ENCODE measurements at regions of chr9 and their contacts with region 1.

Region 1: DNA sequence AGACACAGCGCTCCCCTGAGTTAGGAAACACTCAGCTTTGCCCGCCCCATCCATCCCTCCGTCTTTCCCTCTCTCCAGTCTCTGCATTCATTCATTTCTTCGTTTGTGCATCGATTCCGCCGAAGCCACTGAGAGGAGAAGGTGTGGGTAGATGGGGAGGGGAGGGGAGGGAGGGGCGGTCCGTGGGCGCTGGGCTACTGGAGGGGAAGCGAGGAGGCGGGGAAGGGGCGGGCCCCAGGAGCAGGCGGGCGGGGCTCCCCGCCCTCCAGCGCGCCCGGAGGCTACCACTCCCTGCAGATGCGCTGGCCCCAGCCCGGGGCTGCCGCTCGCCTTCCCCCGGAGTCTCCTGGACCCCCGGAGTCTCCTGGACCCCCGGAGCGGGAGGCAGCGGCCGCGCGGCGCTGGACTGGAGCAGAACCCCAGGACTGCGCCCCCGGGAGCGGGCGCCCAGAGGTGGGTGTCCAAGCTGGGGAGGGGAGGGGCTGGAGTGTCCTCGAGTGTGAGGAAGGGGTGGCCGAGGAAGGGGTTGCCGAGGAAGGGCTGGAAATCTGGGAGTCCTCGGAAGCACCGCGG is 159.5 kb downstream of the C9orf152 start:
- DNase-seq: peak; percentile 46 to 75 (median 66)
- H3K4me3 ChIP-seq: peak overlapping the region in 2 of 4 donors; percentile 18 to 69
- H3K27ac ChIP-seq: peak overlapping the region in 2 of 5 donors; percentile 34 to 43
- H3K4me1 ChIP-seq: peaks cover 14 to 36% of the 10 kb centered on the region in 2 donors
- H3K27me3 ChIP-seq: no peaks in the 10 kb centered on the region
- CTCF ChIP-seq: no peak
- POLR2A ChIP-seq: peak in 1 of 2 donors; percentile 29

Region 2: GRCh38 chr9:109972026-109972882 is 76.2 kb before region 1 on chr9:
- intact Hi-C with region 1: loop called in 1 of 2 experiments (anchors 10 kb)
- DNase-seq: peak in 4 of 7 donors; percentile 18 to 58 (median 32)
- H3K4me3 ChIP-seq: no peak overlapping the region
- H3K27ac ChIP-seq: no peak overlapping the region
- H3K4me1 ChIP-seq: peaks cover 19 to 38% of the 10 kb centered on the region in 2 donors
- H3K27me3 ChIP-seq: no peaks in the 10 kb centered on the region
- CTCF ChIP-seq: no peak
- POLR2A ChIP-seq: no peak

Measured in adrenal gland (tissue), 19 donors.